K562 (cell line): ENCODE measurements at regions of chr4 and their contacts with region 1.

Region 1: GRCh38 chr4:103091601-103092223 is 7.9 kb downstream of the BDH2 start:
- DNase-seq: peak; percentile 19 to 72 (median 24)
- ATAC-seq: peak; percentile 76
- H3K4me3 ChIP-seq: no peak overlapping the region
- H3K27ac ChIP-seq: no peak overlapping the region
- H3K4me1 ChIP-seq: no peaks in the 10 kb centered on the region
- H3K27me3 ChIP-seq: no peaks in the 10 kb centered on the region
- CTCF ChIP-seq: peak; percentile 62 to 89 (median 71)
- EP300 ChIP-seq: no peak
- POLR2A ChIP-seq: no peak
- RAD21 ChIP-seq: peak; percentile 70 to 74

Region 2: DNA sequence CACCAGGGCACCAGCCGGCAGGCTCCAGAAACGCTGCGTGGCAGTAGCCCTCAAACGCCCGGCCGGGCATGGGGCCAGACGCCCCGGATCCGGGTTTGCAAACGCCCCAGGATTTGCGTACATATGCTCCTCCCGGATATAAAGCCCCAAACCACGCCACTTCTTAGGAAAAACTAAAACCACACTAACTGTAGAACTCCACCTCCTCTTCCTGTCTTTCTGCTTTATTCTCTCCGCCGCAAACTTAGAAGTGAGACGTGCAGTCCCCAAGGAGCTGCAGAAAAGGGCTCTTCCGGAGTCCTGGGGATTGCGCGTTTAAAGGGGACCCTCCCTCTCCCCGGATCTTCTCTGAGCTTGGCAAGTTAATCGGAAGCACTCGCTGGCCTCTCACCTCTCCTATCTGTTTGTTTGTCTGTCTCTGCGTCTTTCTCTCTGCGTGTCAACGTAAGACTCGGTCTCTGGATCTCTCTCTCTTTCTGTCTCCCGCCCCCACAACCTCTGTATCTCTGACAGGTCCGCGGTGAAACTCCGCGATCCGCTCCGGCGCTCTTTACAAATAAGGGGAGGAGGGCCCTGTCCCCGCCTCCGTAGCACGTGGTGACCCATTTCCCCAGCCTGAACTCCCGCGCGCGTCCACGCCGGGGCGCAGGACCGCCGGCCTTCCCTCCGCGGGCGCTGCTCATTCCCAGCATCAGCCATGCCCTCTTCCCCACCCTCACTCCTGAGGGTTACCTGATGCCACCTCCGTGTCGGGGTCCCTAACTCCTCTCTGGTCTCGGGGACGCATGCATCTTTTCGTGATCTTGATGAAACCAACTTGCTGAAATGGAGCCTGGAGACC is 746.5 kb before region 1 on chr4 and contains the start of gene SLC39A8:
- CTCF ChIA-PET with region 1: interaction called, 3 read pairs
- POLR2A ChIA-PET with region 1: no interaction called
- in situ Hi-C with region 1: no loop called
- intact Hi-C with region 1: loop called (anchors 5 kb)
- DNase-seq: peak; percentile 89 to 94 (median 90)
- ATAC-seq: peak; percentile 91
- H3K4me3 ChIP-seq: peak within 1 kb of the TSS; percentile 51
- H3K27ac ChIP-seq: peak within 1 kb of the TSS; percentile 85
- H3K4me1 ChIP-seq: peaks cover 22 to 25% of the 10 kb centered on the region in 2 experiments
- H3K27me3 ChIP-seq: no peaks in the 10 kb centered on the region
- CTCF ChIP-seq: peak; percentile 79 to 86 (median 85)
- EP300 ChIP-seq: peak; percentile 48
- POLR2A ChIP-seq: peak; percentile 81
- RAD21 ChIP-seq: peak; percentile 47 to 68
- polyA plus RNA-seq, gene SLC39A8: 8.2 to 10.1 TPM

Region 3: DNA sequence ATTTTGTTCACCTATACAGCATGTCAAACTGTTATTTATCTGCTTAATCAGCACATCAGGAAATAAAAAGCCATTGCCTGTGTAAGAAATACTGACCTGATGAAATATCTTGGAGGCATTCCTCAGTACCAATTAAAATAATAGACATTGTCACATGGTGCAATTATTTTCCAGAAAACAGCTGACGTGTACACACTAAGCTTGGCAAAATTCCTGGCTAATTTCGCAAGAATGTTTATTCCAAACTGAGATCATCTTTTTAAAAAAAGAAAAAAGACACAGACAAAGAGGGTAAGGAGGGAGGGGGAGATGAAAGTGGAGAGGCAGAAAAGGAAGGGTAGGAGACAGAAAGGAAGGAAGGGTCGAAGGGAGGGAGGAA is 652.5 kb before region 1 on chr4:
- CTCF ChIA-PET with region 1: no interaction called
- POLR2A ChIA-PET with region 1: no interaction called
- in situ Hi-C with region 1: loop called (anchors 5 kb)
- intact Hi-C with region 1: loop called (anchors 5 kb)
- DNase-seq: no peak
- ATAC-seq: no peak
- H3K4me3 ChIP-seq: no peak overlapping the region
- H3K27ac ChIP-seq: no peak overlapping the region; the same call in 2 of the 3 replicates
- H3K4me1 ChIP-seq: peaks cover 0 to 16% of the 10 kb centered on the region in 2 experiments; a peak in 1 of 5 replicates
- H3K27me3 ChIP-seq: no peaks in the 10 kb centered on the region; a peak in 1 of 5 replicates
- CTCF ChIP-seq: no peak
- EP300 ChIP-seq: no peak
- POLR2A ChIP-seq: no peak
- RAD21 ChIP-seq: no peak

Region 4: GRCh38 chr4:102620697-102621497 is 470.8 kb before region 1 on chr4:
- CTCF ChIA-PET with region 1: interaction called, 9 read pairs
- POLR2A ChIA-PET with region 1: no interaction called
- in situ Hi-C with region 1: loop called (anchors 5 kb)
- intact Hi-C with region 1: loop called (anchors 1 kb)
- DNase-seq: peak; percentile 52 to 81 (median 64)
- ATAC-seq: peak; percentile 95
- H3K4me3 ChIP-seq: no peak overlapping the region
- H3K27ac ChIP-seq: no peak overlapping the region
- H3K4me1 ChIP-seq: no peaks in the 10 kb centered on the region
- H3K27me3 ChIP-seq: no peaks in the 10 kb centered on the region
- CTCF ChIP-seq: peak; percentile 71 to 94 (median 88)
- EP300 ChIP-seq: peak; percentile 18; the same call in 1 of the 2 replicates
- POLR2A ChIP-seq: no peak
- RAD21 ChIP-seq: peak; percentile 94 to 95

Region 5: DNA sequence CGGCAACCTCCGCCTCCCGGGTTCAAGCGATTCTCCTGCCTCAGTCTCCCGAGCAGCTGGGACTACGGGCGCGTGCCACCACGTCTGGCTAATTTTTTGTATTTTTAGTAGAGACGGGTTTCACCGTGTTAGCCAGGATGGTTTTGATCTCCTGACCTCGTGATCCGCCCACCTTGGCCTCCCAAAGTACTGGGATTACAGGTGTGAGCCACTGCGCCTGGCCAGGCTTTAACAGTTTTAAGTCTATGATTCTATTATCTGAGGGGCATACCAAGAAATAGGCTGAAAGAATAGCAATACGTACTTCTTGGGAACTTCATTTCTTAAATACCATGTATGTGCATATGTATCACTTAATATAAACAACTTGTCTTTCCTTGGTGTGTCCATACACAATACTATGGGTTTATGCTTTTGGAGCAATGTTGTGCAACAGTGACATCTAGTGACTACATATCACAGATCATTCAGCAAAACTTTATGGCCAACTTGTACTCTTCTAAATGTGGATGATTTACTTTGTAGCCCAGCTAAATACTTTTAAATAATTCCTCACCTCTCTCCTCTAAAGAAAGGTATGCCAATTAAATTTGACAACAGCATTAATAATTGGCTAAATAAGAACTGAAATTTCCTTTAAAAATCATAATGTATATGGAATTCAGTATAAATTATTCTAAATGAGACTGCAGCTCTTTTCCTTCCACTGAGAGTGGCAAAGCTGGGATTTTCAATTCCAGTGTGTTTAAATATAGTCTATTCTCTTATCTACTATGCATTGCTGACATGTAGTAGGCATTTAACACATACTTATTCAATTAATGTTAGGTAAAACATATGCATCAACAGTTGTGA is 82.6 kb before region 1 on chr4:
- CTCF ChIA-PET with region 1: no interaction called
- POLR2A ChIA-PET with region 1: no interaction called
- in situ Hi-C with region 1: no loop called
- intact Hi-C with region 1: loop called (anchors 1 kb)
- DNase-seq: peak; percentile 23 to 78 (median 38)
- ATAC-seq: peak; percentile 93
- H3K4me3 ChIP-seq: no peak overlapping the region
- H3K27ac ChIP-seq: no peak overlapping the region
- H3K4me1 ChIP-seq: peaks cover 9 to 18% of the 10 kb centered on the region in 2 experiments; a peak in 4 of 5 replicates
- H3K27me3 ChIP-seq: no peaks in the 10 kb centered on the region
- CTCF ChIP-seq: peak; percentile 59 to 91 (median 68); a peak in 5 of 6 replicates
- EP300 ChIP-seq: no peak
- POLR2A ChIP-seq: no peak
- RAD21 ChIP-seq: peak; percentile 94 to 97